ENCODE measurements at regions of chr18 and their contacts with region 1.

Region 1: DNA sequence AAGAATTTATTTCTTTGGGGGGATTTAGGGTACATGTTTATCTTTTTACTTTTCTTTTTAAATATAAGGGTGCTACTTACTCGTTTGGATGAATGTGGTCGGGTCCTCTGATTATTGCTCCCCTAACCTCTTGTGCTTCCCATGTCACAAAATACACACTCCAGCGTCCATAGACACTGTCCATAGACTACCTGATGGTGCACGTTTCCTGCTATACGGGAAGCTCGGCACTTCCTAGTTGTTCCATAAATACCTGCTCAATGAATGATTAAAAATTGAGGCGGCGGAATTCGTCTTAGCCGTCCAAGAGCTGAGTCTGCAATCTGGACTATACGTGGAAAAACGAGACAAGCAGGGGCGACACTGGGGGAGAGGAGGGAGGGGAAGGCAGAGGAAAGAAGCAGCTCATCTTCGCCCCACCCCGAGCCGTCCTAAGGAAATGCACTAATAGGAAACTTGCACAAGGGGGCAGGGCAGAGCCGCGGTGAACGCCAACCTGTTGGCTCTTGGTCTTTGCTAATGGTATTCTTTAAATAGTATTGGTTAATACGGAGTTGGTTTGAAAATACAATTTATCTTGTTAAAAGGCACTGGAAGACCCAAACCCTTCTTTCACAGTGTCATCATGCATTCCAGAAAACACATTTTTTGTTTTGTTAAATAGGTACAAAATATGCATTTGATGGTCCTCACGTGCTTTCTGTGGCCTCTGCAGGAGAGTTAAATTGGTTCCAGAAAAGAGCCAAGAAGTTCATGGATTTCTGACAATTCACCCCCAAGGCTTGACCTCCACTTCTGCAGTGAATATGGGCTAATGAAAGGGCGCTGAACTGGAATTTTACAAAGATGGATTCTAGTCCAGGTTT is 73.0 kb upstream of the KCTD1 start:
- DNase-seq: peak; percentile 63
- ATAC-seq: peak; percentile 69

Region 2: DNA sequence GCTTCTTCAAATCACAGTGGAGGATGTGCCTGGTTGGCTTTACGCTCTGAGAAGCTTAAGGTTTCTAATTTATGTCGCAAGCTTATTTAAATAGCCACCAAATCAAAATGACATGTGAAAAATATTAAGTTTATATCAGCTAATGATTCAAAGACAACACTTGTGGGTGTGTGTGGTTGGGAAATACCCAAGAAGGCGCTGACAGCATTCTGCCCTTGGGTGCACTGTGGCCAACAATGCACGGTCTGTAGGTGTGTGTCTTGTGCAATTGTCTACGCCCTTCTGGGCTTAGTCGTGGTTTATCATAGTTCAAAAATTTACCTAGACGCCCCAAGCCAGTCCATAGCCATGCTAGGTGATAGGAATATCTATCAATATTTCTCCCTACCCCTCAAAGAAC is 134.0 kb before region 1 on chr18:
- intact Hi-C with region 1: no loop called
- DNase-seq: no peak
- ATAC-seq: no peak

Region 3: GRCh38 chr18:26685438-26686157 is 64.2 kb after region 1 on chr18:
- intact Hi-C with region 1: loop called (anchors 5 kb)
- DNase-seq: no peak
- ATAC-seq: peak; percentile 59

Region 4: DNA sequence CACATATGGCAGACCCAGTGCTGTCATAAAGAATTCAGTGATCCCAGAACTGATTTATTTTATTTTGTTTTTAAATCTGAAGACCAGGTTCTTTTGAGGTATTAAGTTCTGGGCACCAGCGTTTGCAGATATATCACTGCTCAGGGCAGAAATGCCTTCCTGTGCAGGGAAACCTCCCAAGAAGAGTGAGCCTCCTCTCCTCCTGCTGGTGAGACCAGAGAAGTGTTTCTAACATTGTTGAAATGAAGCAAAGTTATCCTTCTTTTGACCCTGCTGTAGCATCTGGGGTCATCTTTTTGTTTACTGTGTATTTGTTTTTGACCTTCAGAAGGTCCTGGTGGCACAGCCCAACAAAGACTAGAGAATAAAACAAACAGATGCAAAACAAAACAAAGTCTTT is 150.1 kb after region 1 on chr18:
- intact Hi-C with region 1: loop called (anchors 10 kb)
- DNase-seq: no peak
- ATAC-seq: no peak

Measured in left ventricle myocardium superior (tissue), 1 donor.